Endothelial cell of umbilical vein (primary cell): ENCODE measurements at regions of chr10 and their contacts with region 1.

Region 1: DNA sequence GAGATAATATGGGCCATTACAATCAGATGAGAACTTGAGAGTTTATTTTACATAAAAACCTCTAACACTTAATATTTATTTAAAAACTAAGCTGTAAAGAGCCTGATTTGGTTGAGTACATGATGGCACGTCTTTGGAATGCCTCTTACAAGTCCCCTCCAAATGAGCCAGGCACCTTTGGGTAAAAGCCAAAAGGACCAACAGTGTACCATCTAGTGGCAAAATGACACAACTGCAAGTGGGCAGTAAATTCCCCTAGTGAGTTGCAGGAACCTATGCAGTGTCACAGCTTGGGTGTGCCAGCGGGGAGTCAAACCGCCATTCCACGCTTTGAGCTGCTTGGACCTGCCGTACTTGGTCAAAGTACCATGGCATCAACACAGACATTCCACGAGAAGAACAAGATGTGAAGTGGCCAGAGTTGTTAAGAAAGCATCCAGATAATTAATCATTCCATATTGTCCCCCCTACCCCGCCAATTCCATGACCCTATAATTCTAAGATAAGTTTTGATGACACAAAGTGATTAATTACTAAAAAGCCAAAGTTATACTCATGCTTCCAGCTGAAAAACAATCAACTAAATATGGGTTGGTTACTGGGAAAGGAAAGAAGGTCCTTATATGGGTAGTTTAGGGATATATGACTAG is 115.2 kb downstream of the SORBS1 start:
- DNase-seq: peak; percentile 73
- H3K4me3 ChIP-seq: no peak overlapping the region
- H3K27ac ChIP-seq: peak overlapping the region; percentile 80
- H3K4me1 ChIP-seq: peaks cover 24% of the 10 kb centered on the region
- H3K27me3 ChIP-seq: no peaks in the 10 kb centered on the region
- CTCF ChIP-seq: peak; percentile 74 to 79
- POLR2A ChIP-seq: no peak

Region 2: GRCh38 chr10:95333997-95334804 is 111.8 kb before region 1 on chr10:
- CTCF ChIA-PET with region 1: no interaction called
- POLR2A ChIA-PET with region 1: no interaction called
- dilution Hi-C with region 1: no loop called
- intact Hi-C with region 1: no loop called
- DNase-seq: peak; percentile 89
- H3K4me3 ChIP-seq: no peak overlapping the region
- H3K27ac ChIP-seq: peak overlapping the region; percentile 96
- H3K4me1 ChIP-seq: peaks cover 30% of the 10 kb centered on the region
- H3K27me3 ChIP-seq: no peaks in the 10 kb centered on the region
- CTCF ChIP-seq: no peak
- POLR2A ChIP-seq: peak; percentile 57

Region 3: GRCh38 chr10:95430231-95430951 is 15.6 kb before region 1 on chr10:
- CTCF ChIA-PET with region 1: interaction called, 91 read pairs
- POLR2A ChIA-PET with region 1: no interaction called
- dilution Hi-C with region 1: no loop called
- intact Hi-C with region 1: loop called (anchors 1 kb)
- DNase-seq: peak; percentile 61
- H3K4me3 ChIP-seq: no peak overlapping the region
- H3K27ac ChIP-seq: no peak overlapping the region
- H3K4me1 ChIP-seq: peaks cover 5% of the 10 kb centered on the region
- H3K27me3 ChIP-seq: peaks cover 0 to 2% of the 10 kb centered on the region in 2 experiments
- CTCF ChIP-seq: peak; percentile 89 to 95
- POLR2A ChIP-seq: no peak

Region 4: DNA sequence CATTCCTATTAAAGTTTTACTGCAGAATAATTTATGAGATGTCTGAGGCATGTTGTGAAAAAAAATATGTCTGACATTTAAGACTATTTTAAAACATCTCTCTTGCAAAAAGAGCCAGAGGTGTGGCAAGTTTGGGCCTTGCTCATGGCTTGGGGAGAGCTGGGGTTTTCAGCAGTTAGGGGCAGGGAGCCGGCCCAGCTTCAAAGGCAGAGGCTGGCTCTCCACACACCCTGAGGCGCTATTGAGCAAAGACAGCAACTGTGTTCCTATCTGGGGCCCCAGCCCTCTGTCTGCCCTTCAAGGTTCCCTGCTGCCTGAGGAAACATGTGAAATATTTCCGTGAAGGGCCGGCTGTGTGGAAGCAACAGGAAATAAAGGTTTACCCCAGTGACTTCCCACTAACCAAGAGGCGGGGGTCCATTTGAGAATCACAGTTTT is 21.2 kb after region 1 on chr10:
- CTCF ChIA-PET with region 1: interaction called, 4 read pairs
- POLR2A ChIA-PET with region 1: no interaction called
- dilution Hi-C with region 1: no loop called
- intact Hi-C with region 1: loop called (anchors 2 kb)
- DNase-seq: peak; percentile 81
- H3K4me3 ChIP-seq: no peak overlapping the region
- H3K27ac ChIP-seq: no peak overlapping the region
- H3K4me1 ChIP-seq: peaks cover 8% of the 10 kb centered on the region
- H3K27me3 ChIP-seq: peaks cover 0 to 2% of the 10 kb centered on the region in 2 experiments
- CTCF ChIP-seq: peak; percentile 8 to 54
- POLR2A ChIP-seq: no peak

Region 5: DNA sequence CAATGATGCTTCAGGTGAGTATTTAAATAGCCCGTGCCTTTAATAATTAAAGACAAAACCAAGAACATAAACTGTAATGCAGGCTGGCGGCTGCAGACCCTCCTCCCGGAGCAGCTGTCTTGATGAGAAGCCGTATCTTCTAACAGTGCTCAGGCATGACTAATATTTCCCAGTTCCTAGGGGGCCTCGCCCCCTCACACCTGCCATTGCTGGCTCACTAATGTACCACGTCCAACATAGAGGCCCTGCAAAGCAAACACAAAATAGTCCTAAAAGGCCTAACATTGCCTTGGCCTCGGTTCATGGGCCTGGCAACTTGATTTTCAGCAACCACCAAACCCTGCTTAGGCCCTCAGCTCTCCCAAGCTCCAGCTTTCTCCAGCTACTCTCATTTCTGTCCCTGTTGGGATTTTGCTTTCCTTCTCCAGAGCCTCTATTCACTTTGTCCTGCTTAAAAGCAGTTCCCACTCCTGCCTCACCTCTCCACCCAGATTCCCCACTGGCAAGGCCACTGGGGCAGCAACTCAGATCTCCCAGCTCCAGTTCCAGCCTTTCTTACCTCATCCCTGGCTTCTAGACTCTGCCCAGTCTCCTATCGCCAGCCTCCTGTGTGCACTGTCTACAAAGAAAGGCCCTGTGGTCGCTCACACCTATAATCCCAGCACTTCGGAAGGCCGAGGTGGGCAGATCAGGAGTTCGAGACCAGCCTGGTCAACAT is 99.0 kb after region 1 on chr10:
- CTCF ChIA-PET with region 1: no interaction called
- POLR2A ChIA-PET with region 1: no interaction called
- dilution Hi-C with region 1: no loop called
- intact Hi-C with region 1: no loop called
- DNase-seq: no peak
- H3K4me3 ChIP-seq: no peak overlapping the region
- H3K27ac ChIP-seq: no peak overlapping the region
- H3K4me1 ChIP-seq: no peaks in the 10 kb centered on the region
- H3K27me3 ChIP-seq: no peaks in the 10 kb centered on the region
- CTCF ChIP-seq: no peak
- POLR2A ChIP-seq: no peak

Region 6: DNA sequence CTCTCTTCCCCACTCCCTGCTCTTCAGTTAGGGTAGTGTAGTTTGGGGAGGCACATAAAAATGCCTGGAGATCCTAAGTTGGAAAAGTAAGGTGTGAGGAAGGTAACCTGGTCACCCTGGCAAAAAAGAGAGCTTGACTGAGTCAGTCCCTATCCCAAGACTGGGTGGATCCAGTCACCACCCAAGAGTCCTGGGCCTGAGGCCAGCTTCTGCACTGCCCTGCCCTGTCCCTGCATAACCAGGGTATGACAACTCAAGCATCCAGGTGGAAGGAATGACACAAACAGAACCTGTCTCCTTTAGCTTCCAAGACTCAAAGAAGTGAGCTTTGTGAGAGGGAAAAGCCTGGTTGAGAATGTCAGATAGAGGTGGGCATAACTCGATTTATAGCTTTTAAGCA is 142.1 kb after region 1 on chr10:
- CTCF ChIA-PET with region 1: interaction called, 10 read pairs
- POLR2A ChIA-PET with region 1: no interaction called
- dilution Hi-C with region 1: no loop called
- intact Hi-C with region 1: no loop called
- DNase-seq: no peak
- H3K4me3 ChIP-seq: no peak overlapping the region
- H3K27ac ChIP-seq: no peak overlapping the region
- H3K4me1 ChIP-seq: no peaks in the 10 kb centered on the region
- H3K27me3 ChIP-seq: peaks cover 12 to 17% of the 10 kb centered on the region in 2 experiments
- CTCF ChIP-seq: no peak
- POLR2A ChIP-seq: no peak

Region 7: DNA sequence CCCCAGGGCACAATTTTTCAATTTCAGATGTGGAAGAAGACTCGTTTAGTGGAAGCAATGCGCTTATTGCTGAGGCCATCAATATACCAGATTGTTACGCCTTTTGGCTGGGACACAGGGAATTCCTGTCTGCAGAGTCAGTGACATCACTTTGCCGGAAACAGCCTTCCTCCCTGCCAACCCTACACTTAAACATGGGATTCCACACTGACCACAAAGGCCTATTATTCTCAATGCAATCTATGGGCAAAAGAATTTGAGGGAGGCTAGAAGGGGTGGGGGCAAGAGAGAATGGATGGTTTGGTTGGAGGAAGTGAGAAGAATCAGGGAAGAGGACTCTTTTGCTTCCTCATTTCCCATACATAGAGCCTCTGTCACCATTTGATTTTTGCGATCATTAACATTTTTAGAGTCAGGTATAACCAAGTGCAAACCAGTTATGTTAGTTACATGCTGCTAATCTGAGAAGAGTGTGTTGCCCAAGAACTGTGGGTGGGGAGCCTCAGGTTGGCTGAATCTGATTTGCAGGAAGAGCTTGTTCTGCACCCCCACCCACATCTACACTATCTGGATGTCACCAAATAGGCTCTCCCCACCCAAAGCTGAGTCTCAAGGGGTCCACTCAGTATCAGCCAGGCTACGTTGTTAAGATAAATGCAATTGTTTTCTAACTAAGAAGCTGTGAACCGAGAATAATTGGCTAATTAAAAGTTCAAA is 368.2 kb after region 1 on chr10:
- CTCF ChIA-PET with region 1: no interaction called
- POLR2A ChIA-PET with region 1: no interaction called
- dilution Hi-C with region 1: no loop called
- intact Hi-C with region 1: loop called (anchors 5 kb)
- DNase-seq: peak; percentile 76
- H3K4me3 ChIP-seq: no peak overlapping the region
- H3K27ac ChIP-seq: peak overlapping the region; percentile 41
- H3K4me1 ChIP-seq: peaks cover 46% of the 10 kb centered on the region
- H3K27me3 ChIP-seq: no peaks in the 10 kb centered on the region
- CTCF ChIP-seq: no peak
- POLR2A ChIP-seq: no peak

Region 8: DNA sequence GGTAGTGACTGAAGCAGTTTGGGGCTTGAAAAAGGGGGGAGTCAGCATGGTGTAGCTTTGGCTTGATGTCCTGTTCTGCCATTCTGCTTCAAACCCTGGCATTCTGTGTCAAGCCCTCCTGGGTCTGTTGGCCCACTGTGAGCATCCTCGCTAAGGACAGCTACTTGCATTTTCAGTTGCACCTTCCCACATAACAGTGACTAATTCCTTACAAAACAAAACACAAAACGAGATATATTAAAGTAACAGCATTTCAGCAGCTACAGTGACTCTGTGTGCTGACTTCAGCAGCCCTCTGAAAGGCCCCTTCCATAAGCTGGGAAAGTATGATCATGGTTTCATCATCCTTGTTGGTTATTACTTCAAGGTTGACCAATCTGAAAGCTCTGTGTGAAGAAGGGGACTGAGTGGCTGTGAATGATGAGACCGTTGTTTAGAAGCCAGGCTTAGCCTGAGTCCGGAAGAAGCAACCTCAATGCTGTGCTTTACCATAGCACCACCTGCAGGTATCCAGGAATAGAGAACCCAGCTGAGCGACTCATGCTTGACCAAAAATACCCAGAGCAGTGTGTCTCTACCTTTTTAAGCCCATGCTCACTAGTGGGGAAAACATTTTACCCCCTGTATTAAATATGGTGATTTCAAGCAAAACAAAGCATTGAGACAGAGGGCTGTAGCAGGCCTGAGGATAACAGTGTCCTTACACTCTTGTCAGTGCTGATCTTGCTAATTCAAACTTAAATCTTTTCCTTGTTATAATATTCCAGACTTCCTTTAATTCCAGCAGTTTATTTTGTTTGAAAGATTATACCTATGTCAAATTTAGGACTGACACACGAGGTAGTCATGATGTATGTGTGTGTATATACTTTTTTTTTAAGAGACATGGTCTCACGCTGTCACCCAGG is 419.2 kb after region 1 on chr10:
- CTCF ChIA-PET with region 1: no interaction called
- POLR2A ChIA-PET with region 1: no interaction called
- dilution Hi-C with region 1: no loop called
- intact Hi-C with region 1: no loop called
- DNase-seq: peak; percentile 69
- H3K4me3 ChIP-seq: no peak overlapping the region
- H3K27ac ChIP-seq: no peak overlapping the region
- H3K4me1 ChIP-seq: no peaks in the 10 kb centered on the region
- H3K27me3 ChIP-seq: no peaks in the 10 kb centered on the region
- CTCF ChIP-seq: peak; percentile 59 to 73
- POLR2A ChIP-seq: no peak